ENCODE measurements at regions of chr7 and their contacts with region 1.

Region 1: GRCh38 chr7:103094102-103094501 is 19.2 kb downstream of the ARMC10 start:
- DNase-seq: no peak
- H3K4me3 ChIP-seq: no peak overlapping the region
- H3K27ac ChIP-seq: no peak overlapping the region
- H3K4me1 ChIP-seq: no peaks in the 10 kb centered on the region
- H3K27me3 ChIP-seq: no peaks in the 10 kb centered on the region
- CTCF ChIP-seq: no peak

Region 2: GRCh38 chr7:103074519-103075336 is 19.4 kb before region 1 on chr7 and contains the starts of genes ARMC10 and FBXL13:
- CTCF ChIA-PET with region 1: no interaction called
- POLR2A ChIA-PET with region 1: no interaction called
- intact Hi-C with region 1: no loop called
- DNase-seq: peak; percentile 78 to 95
- H3K4me3 ChIP-seq: peak within 1 kb of the TSS; percentile 92
- H3K27ac ChIP-seq: peak within 1 kb of the TSS; percentile 72
- H3K4me1 ChIP-seq: peaks cover 26% of the 10 kb centered on the region
- H3K27me3 ChIP-seq: no peaks in the 10 kb centered on the region
- CTCF ChIP-seq: no peak
- total RNA-seq, gene ARMC10: 53.3 and 66.0 TPM in 2 replicates
- total RNA-seq, gene FBXL13: 10.4 and 19.4 TPM in 2 replicates

Region 3: DNA sequence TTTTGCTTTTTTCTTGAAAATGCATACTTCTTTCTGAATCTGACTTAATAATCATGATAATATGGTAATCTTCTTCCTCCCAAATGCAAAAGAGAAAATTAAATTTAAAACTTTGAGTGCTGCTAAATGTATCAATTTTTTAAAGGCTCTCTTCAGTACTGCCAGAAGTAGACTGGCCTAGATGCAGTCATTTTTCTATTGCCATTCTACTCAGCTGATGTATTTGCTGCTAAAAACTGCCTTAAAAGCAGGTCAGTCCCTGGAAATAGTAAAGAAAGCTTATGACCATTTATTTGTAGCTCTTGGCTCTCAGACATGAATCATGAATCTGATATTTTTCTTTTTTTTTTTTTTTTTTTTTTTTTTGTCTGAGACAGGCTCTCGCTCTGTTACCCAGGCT is 26.3 kb after region 1 on chr7:
- CTCF ChIA-PET with region 1: interaction called, 4 read pairs
- POLR2A ChIA-PET with region 1: interaction called, 10 read pairs
- intact Hi-C with region 1: no loop called
- DNase-seq: no peak
- H3K4me3 ChIP-seq: no peak overlapping the region
- H3K27ac ChIP-seq: no peak overlapping the region
- H3K4me1 ChIP-seq: no peaks in the 10 kb centered on the region
- H3K27me3 ChIP-seq: no peaks in the 10 kb centered on the region
- CTCF ChIP-seq: no peak

Region 4: GRCh38 chr7:103474956-103475355 is 380.9 kb after region 1 on chr7:
- CTCF ChIA-PET with region 1: no interaction called
- POLR2A ChIA-PET with region 1: no interaction called
- intact Hi-C with region 1: no loop called
- DNase-seq: no peak
- H3K4me3 ChIP-seq: no peak overlapping the region
- H3K27ac ChIP-seq: no peak overlapping the region
- H3K4me1 ChIP-seq: no peaks in the 10 kb centered on the region
- H3K27me3 ChIP-seq: no peaks in the 10 kb centered on the region
- CTCF ChIP-seq: no peak